Activated B cell treated with CpG ODN at 0.5 μM for 24 hours (primary cell): ENCODE measurements at regions of chr7 and their contacts with region 1.

Region 1: DNA sequence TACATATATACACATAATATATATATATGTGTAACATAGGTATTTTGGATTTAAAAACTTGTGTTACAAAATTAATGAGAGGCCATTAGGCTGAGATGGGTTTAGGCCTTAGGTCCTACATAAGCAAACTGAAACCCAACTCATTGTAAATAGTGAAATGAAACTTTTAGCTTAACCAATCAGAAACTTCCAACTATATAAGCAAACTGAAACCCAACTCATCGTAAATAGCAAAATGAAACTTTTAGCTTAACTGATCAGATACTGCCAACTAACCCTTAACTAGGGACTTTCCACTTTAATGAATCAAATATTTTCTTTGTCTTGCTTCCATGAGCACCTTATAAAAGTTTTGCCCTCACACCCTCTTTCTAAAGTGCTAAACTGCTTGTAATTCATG is 17.3 kb upstream of the SAMD9L start:
- DNase-seq: no peak
- ATAC-seq: peak; percentile 97
- H3K4me3 Mint-ChIP-seq: peak overlapping the region; percentile 47
- H3K27ac Mint-ChIP-seq: peak overlapping the region; percentile 86
- H3K4me1 Mint-ChIP-seq: peaks cover 23% of the 10 kb centered on the region
- H3K27me3 Mint-ChIP-seq: no peaks in the 10 kb centered on the region
- CTCF ChIP-seq: no peak

Region 2: GRCh38 chr7:93147363-93147762 is 18.1 kb before region 1 on chr7:
- CTCF ChIA-PET with region 1: no interaction called
- POLR2A ChIA-PET with region 1: interaction called, 3 read pairs
- intact Hi-C with region 1: loop called (anchors 1 kb)
- DNase-seq: no peak
- ATAC-seq: peak; percentile 73
- H3K4me3 Mint-ChIP-seq: peak overlapping the region; percentile 90
- H3K27ac Mint-ChIP-seq: peak overlapping the region; percentile 83
- H3K4me1 Mint-ChIP-seq: peaks cover 58% of the 10 kb centered on the region
- H3K27me3 Mint-ChIP-seq: no peaks in the 10 kb centered on the region
- CTCF ChIP-seq: no peak

Region 3: DNA sequence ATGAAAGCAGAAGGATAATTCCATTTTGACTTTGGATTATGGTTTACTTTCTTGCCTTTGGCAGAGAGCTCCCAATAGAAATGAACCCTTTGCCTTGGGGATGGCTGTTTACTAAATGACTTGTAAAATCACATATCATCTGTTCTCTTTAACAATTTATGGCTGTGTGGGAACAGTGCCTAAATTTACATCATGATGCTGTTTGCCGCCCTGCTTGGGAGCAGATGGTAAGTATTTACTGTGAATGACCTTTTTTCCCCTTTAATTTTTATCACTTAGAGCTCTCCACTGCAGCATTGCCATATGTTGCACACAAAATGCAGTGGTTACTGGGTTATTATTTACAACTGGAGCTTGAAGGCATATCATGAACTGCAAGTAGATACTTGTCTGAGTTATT is 47.4 kb after region 1 on chr7:
- CTCF ChIA-PET with region 1: no interaction called
- POLR2A ChIA-PET with region 1: no interaction called
- intact Hi-C with region 1: no loop called
- DNase-seq: no peak
- ATAC-seq: no peak
- H3K4me3 Mint-ChIP-seq: no peak overlapping the region
- H3K27ac Mint-ChIP-seq: no peak overlapping the region
- H3K4me1 Mint-ChIP-seq: peaks cover 2% of the 10 kb centered on the region
- H3K27me3 Mint-ChIP-seq: peaks cover 21% of the 10 kb centered on the region
- CTCF ChIP-seq: no peak